ENCODE measurements at regions of chr13 and their contacts with region 1.

Region 1: GRCh38 chr13:41061075-41061913 is at the start of gene WBP4:
- DNase-seq: peak; percentile 73 to 99 (median 86)
- ATAC-seq: peak; percentile 58 to 62
- H3K4me3 Mint-ChIP-seq: peak within 1 kb of the TSS; percentile 95 to 100 (median 100)
- H3K27ac Mint-ChIP-seq: peak within 1 kb of the TSS; percentile 98 to 100 (median 99)
- H3K4me1 Mint-ChIP-seq: peaks cover 20 to 66% (median 57%) of the 10 kb centered on the region in 4 donors
- H3K27me3 Mint-ChIP-seq: peaks cover 0 to 13% (median 0%) of the 10 kb centered on the region in 5 donors
- polyA plus RNA-seq, gene WBP4: 3.7 to 4.9 (median 3.9) TPM

Region 2: GRCh38 chr13:40974460-40975407 is 86.6 kb before region 1 on chr13:
- POLR2A ChIA-PET with region 1: interaction called, 14 read pairs
- DNase-seq: peak in 8 of 10 donors; percentile 26 to 67 (median 54)
- ATAC-seq: peak; percentile 79 to 89
- H3K4me3 Mint-ChIP-seq: peak overlapping the region; percentile 45 to 99 (median 72)
- H3K27ac Mint-ChIP-seq: peak overlapping the region in 9 of 10 donors; percentile 60 to 96 (median 87)
- H3K4me1 Mint-ChIP-seq: peaks cover 33 to 97% (median 88%) of the 10 kb centered on the region in 4 donors
- H3K27me3 Mint-ChIP-seq: no peaks in the 10 kb centered on the region

Region 3: DNA sequence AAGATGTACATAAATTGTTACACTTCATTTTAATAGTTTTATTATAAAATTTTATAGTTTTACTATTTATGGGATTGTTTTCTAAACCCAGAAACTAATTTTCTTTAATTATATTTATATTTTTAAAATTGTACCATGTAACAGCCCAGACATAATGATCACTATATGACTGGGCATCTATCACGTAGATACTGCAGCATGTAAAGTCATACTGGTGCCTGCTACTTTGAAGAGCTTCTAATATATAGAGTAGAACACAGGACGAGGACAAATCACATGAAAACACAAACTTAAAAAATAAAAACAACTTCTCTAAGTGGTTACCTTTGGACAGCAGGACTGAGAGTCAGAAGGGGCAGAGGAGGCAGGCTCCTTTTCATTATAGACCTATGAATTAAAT is 47.5 kb before region 1 on chr13:
- POLR2A ChIA-PET with region 1: interaction called, 51 read pairs
- DNase-seq: no peak
- ATAC-seq: no peak
- H3K4me3 Mint-ChIP-seq: peak overlapping the region; percentile 36 to 94 (median 88)
- H3K27ac Mint-ChIP-seq: peak overlapping the region in 9 of 10 donors; percentile 87 to 98 (median 94)
- H3K4me1 Mint-ChIP-seq: peaks cover 23 to 70% (median 49%) of the 10 kb centered on the region in 4 donors
- H3K27me3 Mint-ChIP-seq: no peaks in the 10 kb centered on the region

Region 4: DNA sequence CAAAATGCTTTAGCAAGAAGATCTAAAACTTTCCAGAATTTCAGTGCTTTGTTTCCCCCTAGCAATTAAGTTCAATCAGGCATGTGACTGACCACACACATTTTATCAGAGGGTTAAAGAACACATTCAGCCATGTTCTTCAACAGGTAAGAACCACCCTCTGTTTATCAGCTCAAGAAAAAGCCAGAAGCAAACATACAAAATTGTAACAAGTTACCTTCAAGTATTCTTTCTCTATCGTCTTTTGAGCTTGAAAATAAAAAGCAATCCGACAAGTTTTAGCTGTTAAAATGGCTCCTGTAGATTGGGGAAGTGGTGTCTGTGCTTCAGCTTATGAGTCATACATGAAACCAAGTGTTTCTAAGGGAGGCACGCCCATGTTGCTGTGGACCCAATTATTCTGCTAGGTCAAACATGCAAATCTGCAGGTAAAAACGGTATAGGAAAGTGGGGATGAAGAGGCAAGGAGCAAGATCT is 42.2 kb before region 1 on chr13 and contains the start of gene ELF1:
- POLR2A ChIA-PET with region 1: interaction called, 51 read pairs
- DNase-seq: peak in 9 of 10 donors; percentile 47 to 83 (median 64)
- ATAC-seq: peak; percentile 89 to 91
- H3K4me3 Mint-ChIP-seq: peak within 1 kb of the TSS; percentile 80 to 96 (median 92)
- H3K27ac Mint-ChIP-seq: peak within 1 kb of the TSS; percentile 95 to 98 (median 97)
- H3K4me1 Mint-ChIP-seq: peaks cover 20 to 54% (median 47%) of the 10 kb centered on the region in 4 donors
- H3K27me3 Mint-ChIP-seq: no peaks in the 10 kb centered on the region
- polyA plus RNA-seq, gene ELF1: 127 to 155 (median 130) TPM

Measured in naive thymus-derived CD8-positive, alpha-beta T cell (primary cell).